ENCODE measurements at regions of chr18 and their contacts with region 1.

Region 1: GRCh38 chr18:79644006-79644665 is 35.5 kb upstream of the CTDP1 start:
- DNase-seq: peak; percentile 88
- ATAC-seq: peak; percentile 99
- H3K4me3 ChIP-seq: no peak overlapping the region
- H3K27ac ChIP-seq: no peak overlapping the region
- H3K4me1 ChIP-seq: peaks cover 0 to 5% of the 10 kb centered on the region in 2 experiments; a peak in 1 of 4 replicates
- H3K27me3 ChIP-seq: no peaks in the 10 kb centered on the region
- CTCF ChIP-seq: peak; percentile 88 to 95 (median 90)
- POLR2A ChIP-seq: no peak
- RAD21 ChIP-seq: peak; percentile 99

Region 2: GRCh38 chr18:78875268-78875997 is 768.7 kb before region 1 on chr18:
- CTCF ChIA-PET with region 1: no interaction called
- POLR2A ChIA-PET with region 1: no interaction called
- RAD21 ChIA-PET with region 1: no interaction called
- intact Hi-C with region 1: loop called (anchors 10 kb)
- DNase-seq: peak; percentile 19
- ATAC-seq: peak; percentile 81
- H3K4me3 ChIP-seq: no peak overlapping the region
- H3K27ac ChIP-seq: no peak overlapping the region
- H3K4me1 ChIP-seq: no peaks in the 10 kb centered on the region
- H3K27me3 ChIP-seq: 0 out of 2 replicates have a peak, but pooled peaks cover 7% of the 10 kb centered on the region
- CTCF ChIP-seq: peak; percentile 49 to 79 (median 75); a peak in 5 of 6 replicates
- POLR2A ChIP-seq: no peak
- RAD21 ChIP-seq: peak; percentile 47

Region 3: DNA sequence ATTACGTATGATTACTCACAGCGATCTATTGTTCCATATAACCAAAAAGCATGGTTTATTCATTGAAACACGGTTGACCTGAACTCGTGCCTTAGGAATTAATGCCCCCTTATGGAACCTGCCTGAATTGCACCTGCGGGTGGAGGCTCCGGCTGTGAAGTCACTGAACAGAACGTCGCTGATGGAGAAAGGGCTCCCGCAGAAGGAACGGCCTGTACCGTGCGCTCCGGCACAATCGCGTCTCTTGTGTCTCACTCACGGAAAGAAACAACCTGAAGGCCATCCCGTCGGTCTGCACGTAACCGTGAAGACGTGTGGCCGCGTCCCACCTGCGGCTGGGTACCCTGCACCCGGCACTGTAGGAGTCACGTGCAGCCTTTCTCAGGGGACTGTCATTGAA is 115.3 kb before region 1 on chr18:
- CTCF ChIA-PET with region 1: no interaction called
- POLR2A ChIA-PET with region 1: no interaction called
- RAD21 ChIA-PET with region 1: no interaction called
- intact Hi-C with region 1: loop called (anchors 2 kb)
- DNase-seq: peak; percentile 21
- ATAC-seq: peak; percentile 84
- H3K4me3 ChIP-seq: no peak overlapping the region
- H3K27ac ChIP-seq: no peak overlapping the region
- H3K4me1 ChIP-seq: no peaks in the 10 kb centered on the region
- H3K27me3 ChIP-seq: no peaks in the 10 kb centered on the region
- CTCF ChIP-seq: peak; percentile 65 to 85 (median 77)
- POLR2A ChIP-seq: no peak
- RAD21 ChIP-seq: peak; percentile 86

Measured in HCT116 (cell line).